ENCODE measurements at regions of chr9 and their contacts with region 1.

Region 1: DNA sequence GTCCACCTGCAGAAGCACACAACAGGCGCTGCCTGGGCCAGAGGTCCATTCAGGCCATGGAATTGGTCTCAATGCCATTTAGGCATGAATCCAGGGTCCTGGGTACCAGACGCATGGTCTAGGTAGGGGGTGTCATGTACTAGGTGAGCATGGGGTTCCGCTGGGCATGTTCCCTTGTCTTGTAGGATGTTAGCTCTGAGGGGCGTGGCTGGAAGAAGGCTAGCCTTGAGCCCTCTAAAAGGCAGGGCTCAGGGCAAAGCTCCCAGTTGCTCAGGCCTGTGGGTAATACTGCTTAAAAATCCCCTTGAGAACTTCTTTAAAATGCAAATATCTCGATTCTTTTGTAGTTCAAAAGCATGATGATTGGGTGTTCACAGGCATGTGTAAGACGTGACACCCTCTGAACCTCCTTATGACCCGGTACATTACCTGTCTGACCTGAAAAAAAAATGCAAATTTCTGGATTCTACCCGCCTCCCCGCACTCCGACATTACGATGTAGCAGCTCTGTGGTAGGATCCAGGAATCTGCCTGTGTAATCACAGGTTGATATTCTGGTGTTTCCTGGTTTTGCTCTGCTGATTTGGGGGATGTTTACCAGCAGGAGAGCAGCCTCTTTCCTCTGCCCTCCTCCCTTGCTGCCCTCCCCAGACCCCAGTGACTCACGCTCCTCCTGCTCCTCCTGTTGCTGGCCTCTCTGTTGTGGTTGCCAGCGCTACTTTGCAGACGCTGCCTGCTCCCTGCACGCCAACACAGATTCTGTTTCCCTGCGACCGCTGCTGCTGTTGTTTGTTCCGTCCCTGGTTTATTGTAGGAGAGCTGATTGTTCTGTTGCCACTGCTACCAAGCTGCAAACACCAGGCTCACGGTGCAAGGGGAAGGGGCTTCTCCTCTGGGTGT is 5.7 kb downstream of the TMC1 start:
- DNase-seq: peak; percentile 91
- H3K4me3 Mint-ChIP-seq: peak overlapping the region; percentile 73
- H3K27ac Mint-ChIP-seq: peak overlapping the region; percentile 93
- H3K4me1 Mint-ChIP-seq: peaks cover 42% of the 10 kb centered on the region
- H3K27me3 Mint-ChIP-seq: no peaks in the 10 kb centered on the region

Region 2: GRCh38 chr9:72193478-72193881 is 333.7 kb before region 1 on chr9:
- CTCF ChIA-PET with region 1: no interaction called
- POLR2A ChIA-PET with region 1: no interaction called
- intact Hi-C with region 1: no loop called
- DNase-seq: no peak
- H3K4me3 Mint-ChIP-seq: no peak overlapping the region
- H3K27ac Mint-ChIP-seq: no peak overlapping the region
- H3K4me1 Mint-ChIP-seq: no peaks in the 10 kb centered on the region
- H3K27me3 Mint-ChIP-seq: peaks cover 14% of the 10 kb centered on the region

Region 3: GRCh38 chr9:72292256-72292682 is 234.9 kb before region 1 on chr9:
- CTCF ChIA-PET with region 1: no interaction called
- POLR2A ChIA-PET with region 1: no interaction called
- intact Hi-C with region 1: loop called (anchors 1 kb)
- DNase-seq: no peak
- H3K4me3 Mint-ChIP-seq: no peak overlapping the region
- H3K27ac Mint-ChIP-seq: no peak overlapping the region
- H3K4me1 Mint-ChIP-seq: no peaks in the 10 kb centered on the region
- H3K27me3 Mint-ChIP-seq: peaks cover 7% of the 10 kb centered on the region

Region 4: DNA sequence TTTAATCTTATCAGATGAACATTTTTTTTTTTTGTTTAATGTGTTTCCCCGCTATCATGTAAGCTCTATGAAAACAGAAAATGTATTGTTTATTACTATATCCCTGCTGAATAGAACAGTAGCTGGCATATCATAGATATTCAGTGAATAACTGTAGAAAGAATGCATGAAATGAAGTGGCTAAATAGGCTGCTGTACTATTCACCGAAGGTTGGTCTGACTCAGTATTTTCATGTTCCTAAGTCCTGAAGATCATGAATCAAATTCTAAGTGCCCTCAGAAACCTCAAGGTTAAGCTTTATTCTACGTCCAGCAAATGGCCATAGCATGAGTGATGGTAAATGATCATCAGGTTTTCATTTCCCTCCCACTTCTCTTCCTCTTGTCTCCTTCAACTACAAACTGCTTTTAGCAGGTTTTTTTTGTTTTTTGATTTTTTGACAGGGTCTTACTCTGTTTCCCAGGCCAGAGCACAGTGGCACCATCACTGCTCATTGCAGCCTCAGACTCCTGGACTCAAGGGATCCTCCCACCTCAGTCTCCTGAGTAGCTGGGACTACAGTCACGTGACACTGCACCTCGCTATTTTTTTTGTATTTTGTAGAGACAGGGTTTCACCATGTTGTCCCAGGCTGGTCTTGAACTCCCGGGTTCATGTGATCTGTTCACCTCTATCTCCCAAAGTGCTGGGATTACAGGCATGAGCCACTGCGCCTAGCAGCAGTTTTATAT is 143.0 kb before region 1 on chr9:
- CTCF ChIA-PET with region 1: no interaction called
- POLR2A ChIA-PET with region 1: no interaction called
- intact Hi-C with region 1: loop called (anchors 1 kb)
- DNase-seq: no peak
- H3K4me3 Mint-ChIP-seq: no peak overlapping the region
- H3K27ac Mint-ChIP-seq: no peak overlapping the region
- H3K4me1 Mint-ChIP-seq: peaks cover 7% of the 10 kb centered on the region
- H3K27me3 Mint-ChIP-seq: no peaks in the 10 kb centered on the region

Region 5: DNA sequence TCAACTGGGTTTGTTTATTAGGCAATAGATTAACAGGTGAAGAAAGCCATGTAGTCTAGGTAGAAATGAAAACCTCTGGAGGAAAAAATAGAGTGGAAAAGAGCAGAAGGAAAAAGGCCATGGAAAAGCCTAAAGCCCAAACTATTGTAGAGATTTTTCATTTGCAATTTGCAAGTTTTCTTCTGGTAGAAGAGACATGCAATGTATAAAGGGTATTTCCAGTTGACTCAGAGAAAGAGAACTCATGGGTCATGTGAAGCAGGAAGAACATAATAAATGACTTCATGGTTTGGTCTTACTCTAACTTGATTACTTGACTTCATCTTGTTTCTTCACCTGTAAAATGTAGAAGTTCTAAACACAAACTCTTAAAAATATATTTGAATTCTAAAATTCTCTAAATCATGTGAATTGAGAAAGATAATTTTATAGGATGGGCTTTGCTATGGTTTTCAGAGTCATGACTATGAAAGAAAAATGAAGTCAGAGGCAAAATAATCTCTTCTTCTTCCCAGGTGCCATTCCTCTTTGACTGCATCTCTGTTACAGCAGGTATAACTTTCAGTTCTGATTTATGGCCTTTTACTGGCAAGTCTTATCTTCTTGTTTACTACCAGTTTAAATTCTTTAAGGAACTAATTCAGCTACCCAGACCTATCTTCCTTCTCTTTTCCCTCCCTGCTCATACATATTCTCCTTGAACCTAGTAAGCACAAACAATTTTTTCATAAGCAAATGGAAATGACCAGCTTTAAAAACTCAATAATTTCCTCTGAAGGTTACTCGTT is 53.5 kb before region 1 on chr9:
- CTCF ChIA-PET with region 1: no interaction called
- POLR2A ChIA-PET with region 1: no interaction called
- intact Hi-C with region 1: loop called (anchors 1 kb)
- DNase-seq: no peak
- H3K4me3 Mint-ChIP-seq: no peak overlapping the region
- H3K27ac Mint-ChIP-seq: peak overlapping the region; percentile 79
- H3K4me1 Mint-ChIP-seq: peaks cover 41% of the 10 kb centered on the region
- H3K27me3 Mint-ChIP-seq: no peaks in the 10 kb centered on the region

Region 6: GRCh38 chr9:72540348-72540873 is 13.3 kb after region 1 on chr9:
- CTCF ChIA-PET with region 1: interaction called, 4 read pairs
- POLR2A ChIA-PET with region 1: interaction called, 7 read pairs
- intact Hi-C with region 1: loop called (anchors 1 kb)
- DNase-seq: no peak
- H3K4me3 Mint-ChIP-seq: no peak overlapping the region
- H3K27ac Mint-ChIP-seq: no peak overlapping the region
- H3K4me1 Mint-ChIP-seq: peaks cover 34% of the 10 kb centered on the region
- H3K27me3 Mint-ChIP-seq: no peaks in the 10 kb centered on the region

Region 7: DNA sequence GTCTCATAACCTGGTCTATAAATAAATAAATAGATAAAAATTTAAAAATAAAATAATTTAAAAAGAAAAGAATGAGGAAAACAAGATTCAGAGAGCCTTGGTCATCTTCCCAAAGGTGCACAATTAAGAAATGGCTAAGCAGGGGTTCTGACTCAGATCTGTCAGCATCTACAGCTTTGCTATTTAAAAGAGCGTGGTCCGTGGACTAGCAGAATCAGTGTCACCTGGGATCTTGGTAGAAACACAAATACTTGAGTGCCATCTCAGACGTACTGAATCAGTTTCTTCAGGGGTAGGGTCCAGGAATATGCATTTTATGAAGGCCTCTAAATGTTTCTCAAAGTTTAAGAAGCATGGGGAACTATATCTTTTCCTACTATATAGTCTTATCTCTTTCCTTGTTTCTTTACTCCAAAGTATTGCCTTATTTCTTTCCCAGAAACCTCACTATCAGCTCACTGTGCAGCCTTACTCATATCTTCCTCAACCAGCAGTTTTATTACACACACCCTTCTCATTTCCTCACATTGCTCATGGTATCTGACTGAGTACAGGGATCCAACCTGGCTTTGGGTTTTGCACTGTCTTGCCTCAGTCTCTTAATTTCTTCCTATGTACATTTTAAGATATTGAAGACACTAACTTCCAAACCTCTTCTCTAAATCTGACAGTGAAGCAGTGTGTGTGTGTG is 52.9 kb after region 1 on chr9:
- CTCF ChIA-PET with region 1: no interaction called
- POLR2A ChIA-PET with region 1: interaction called, 3 read pairs
- intact Hi-C with region 1: loop called (anchors 1 kb)
- DNase-seq: no peak
- H3K4me3 Mint-ChIP-seq: no peak overlapping the region
- H3K27ac Mint-ChIP-seq: peak overlapping the region; percentile 4
- H3K4me1 Mint-ChIP-seq: peaks cover 42% of the 10 kb centered on the region
- H3K27me3 Mint-ChIP-seq: no peaks in the 10 kb centered on the region

Region 8: DNA sequence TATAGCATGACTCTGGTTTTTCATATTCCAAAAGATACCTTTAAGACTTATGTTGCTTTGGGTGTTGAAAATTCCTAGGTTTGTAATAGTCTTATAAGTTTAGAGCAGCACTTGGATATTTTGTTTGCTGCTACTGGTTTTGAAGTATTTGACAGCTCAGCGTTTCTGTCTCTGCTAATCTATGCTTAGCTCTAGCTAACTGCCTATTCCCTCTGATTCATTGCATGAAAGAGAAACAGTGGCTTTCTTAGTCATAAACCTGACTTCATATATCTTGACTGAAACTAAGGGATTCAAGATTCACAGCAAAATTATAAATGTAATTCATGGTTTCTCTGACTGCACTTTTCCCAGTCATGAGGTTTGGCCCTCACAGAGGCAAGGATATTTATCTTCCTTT is 588.9 kb after region 1 on chr9:
- CTCF ChIA-PET with region 1: no interaction called
- POLR2A ChIA-PET with region 1: no interaction called
- intact Hi-C with region 1: loop called (anchors 5 kb)
- DNase-seq: no peak
- H3K4me3 Mint-ChIP-seq: no peak overlapping the region
- H3K27ac Mint-ChIP-seq: no peak overlapping the region
- H3K4me1 Mint-ChIP-seq: peaks cover 42% of the 10 kb centered on the region
- H3K27me3 Mint-ChIP-seq: no peaks in the 10 kb centered on the region